ENCODE measurements at regions of chr6 and their contacts with region 1.

Region 1: DNA sequence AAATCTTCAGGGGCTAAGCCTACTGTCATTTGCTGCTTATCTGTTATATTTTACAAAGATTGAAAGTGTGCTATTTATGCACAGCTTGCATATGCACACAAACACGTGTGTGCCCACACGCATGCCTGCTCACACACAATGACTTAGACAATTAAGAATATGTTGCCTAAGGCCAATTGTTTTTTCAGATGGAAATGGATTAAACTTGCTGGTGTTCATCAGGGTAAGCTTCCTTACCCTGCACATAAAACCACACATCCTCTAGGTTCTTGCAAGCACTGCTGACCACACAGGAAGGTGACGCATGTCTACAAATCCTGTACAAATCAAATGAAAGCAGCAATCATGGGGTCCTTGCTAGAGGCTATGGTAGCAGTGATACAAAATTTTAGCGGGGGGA is 58.4 kb downstream of the GJA10 start:
- DNase-seq: peak; percentile 53
- H3K4me3 Mint-ChIP-seq: peak overlapping the region; percentile 49
- H3K27ac Mint-ChIP-seq: peak overlapping the region; percentile 76
- H3K4me1 Mint-ChIP-seq: peaks cover 67% of the 10 kb centered on the region
- H3K27me3 Mint-ChIP-seq: no peaks in the 10 kb centered on the region

Region 2: GRCh38 chr6:89797317-89797716 is 155.4 kb before region 1 on chr6:
- intact Hi-C with region 1: no loop called
- DNase-seq: no peak
- H3K4me3 Mint-ChIP-seq: no peak overlapping the region
- H3K27ac Mint-ChIP-seq: no peak overlapping the region
- H3K4me1 Mint-ChIP-seq: peaks cover 31% of the 10 kb centered on the region
- H3K27me3 Mint-ChIP-seq: no peaks in the 10 kb centered on the region

Region 3: GRCh38 chr6:89985751-89986493 is 33.2 kb after region 1 on chr6:
- intact Hi-C with region 1: loop called (anchors 2 kb)
- DNase-seq: no peak
- H3K4me3 Mint-ChIP-seq: no peak overlapping the region
- H3K27ac Mint-ChIP-seq: peak overlapping the region; percentile 53
- H3K4me1 Mint-ChIP-seq: peaks cover 64% of the 10 kb centered on the region
- H3K27me3 Mint-ChIP-seq: no peaks in the 10 kb centered on the region

Region 4: DNA sequence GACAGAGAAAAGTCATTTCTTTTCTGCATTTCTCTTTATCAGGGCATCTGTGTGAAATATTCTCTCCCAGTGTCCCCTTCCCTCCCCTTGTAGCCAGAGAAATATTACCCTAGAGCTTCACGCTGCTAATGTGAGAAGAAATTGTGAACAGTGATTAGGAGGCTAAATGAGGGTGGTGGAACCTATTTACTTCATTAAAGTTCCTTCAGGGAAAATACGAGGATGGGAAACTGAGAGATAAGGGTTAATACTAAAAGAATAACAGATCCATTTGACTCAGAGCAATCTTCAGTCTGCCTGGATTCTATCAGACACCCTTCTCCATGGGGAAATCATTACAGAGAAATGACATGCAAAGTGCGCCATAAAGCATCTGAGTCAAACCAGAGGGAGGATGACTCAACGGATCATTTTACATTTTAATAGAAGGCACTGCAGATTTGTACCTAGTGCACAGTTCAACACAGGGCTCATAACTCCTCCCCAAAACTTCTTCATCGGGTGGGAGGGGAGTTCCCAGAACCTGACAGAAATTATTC is 72.9 kb after region 1 on chr6:
- intact Hi-C with region 1: loop called (anchors 5 kb)
- DNase-seq: no peak
- H3K4me3 Mint-ChIP-seq: peak overlapping the region; percentile 72
- H3K27ac Mint-ChIP-seq: peak overlapping the region; percentile 92
- H3K4me1 Mint-ChIP-seq: peaks cover 71% of the 10 kb centered on the region
- H3K27me3 Mint-ChIP-seq: no peaks in the 10 kb centered on the region

Region 5: GRCh38 chr6:90110971-90111370 is 158.3 kb after region 1 on chr6:
- intact Hi-C with region 1: loop called (anchors 2 kb)
- DNase-seq: peak; percentile 76
- H3K4me3 Mint-ChIP-seq: peak overlapping the region; percentile 0
- H3K27ac Mint-ChIP-seq: peak overlapping the region; percentile 68
- H3K4me1 Mint-ChIP-seq: peaks cover 69% of the 10 kb centered on the region
- H3K27me3 Mint-ChIP-seq: no peaks in the 10 kb centered on the region

Region 6: GRCh38 chr6:90194371-90194841 is 241.7 kb after region 1 on chr6:
- intact Hi-C with region 1: loop called (anchors 5 kb)
- DNase-seq: no peak
- H3K4me3 Mint-ChIP-seq: no peak overlapping the region
- H3K27ac Mint-ChIP-seq: peak overlapping the region; percentile 43
- H3K4me1 Mint-ChIP-seq: peaks cover 63% of the 10 kb centered on the region
- H3K27me3 Mint-ChIP-seq: no peaks in the 10 kb centered on the region

Region 7: DNA sequence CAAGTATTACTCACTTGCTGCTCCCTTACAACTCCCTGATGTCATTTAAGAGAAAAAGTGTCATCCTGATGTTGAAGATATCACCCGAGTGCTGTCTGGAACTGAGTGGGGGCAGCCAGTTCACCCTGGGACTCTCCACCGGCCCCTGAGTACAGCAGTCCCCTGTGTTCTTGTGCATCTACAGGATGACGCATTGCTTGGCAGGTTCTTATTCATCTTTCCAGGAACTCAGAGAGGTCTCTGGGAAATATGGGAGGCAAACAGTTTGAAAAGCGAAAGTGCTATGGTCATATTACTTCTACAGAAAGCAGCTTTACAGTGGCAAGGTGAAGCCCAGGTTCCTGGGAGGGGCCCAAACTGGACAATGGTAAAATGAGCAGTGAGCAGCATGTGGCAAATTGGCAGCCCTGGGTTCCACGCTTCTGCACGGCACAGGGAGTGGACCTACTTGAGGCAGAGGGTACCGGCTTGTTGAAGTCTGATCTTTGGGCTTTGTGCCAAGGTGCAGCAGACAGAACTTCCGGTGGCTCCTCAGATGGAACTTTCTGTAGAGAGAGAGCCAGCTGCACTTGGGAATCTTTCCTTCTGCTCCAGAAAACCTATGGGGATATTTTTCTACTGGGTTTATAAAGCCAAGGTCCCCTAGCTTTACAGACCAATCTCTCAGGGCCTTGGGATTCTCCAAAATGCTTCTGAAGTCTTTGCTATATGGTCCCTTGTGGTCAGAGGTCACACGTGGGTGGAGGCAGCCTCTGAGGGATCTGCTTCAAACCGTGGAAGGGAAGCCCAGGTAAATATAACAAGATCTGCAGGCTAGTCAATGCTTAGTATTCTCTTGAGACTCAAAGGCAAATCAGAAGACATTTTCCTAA is 505.9 kb after region 1 on chr6:
- intact Hi-C with region 1: loop called (anchors 5 kb)
- DNase-seq: peak; percentile 68
- H3K4me3 Mint-ChIP-seq: peak overlapping the region; percentile 27
- H3K27ac Mint-ChIP-seq: peak overlapping the region; percentile 95
- H3K4me1 Mint-ChIP-seq: peaks cover 76% of the 10 kb centered on the region
- H3K27me3 Mint-ChIP-seq: no peaks in the 10 kb centered on the region

Region 8: DNA sequence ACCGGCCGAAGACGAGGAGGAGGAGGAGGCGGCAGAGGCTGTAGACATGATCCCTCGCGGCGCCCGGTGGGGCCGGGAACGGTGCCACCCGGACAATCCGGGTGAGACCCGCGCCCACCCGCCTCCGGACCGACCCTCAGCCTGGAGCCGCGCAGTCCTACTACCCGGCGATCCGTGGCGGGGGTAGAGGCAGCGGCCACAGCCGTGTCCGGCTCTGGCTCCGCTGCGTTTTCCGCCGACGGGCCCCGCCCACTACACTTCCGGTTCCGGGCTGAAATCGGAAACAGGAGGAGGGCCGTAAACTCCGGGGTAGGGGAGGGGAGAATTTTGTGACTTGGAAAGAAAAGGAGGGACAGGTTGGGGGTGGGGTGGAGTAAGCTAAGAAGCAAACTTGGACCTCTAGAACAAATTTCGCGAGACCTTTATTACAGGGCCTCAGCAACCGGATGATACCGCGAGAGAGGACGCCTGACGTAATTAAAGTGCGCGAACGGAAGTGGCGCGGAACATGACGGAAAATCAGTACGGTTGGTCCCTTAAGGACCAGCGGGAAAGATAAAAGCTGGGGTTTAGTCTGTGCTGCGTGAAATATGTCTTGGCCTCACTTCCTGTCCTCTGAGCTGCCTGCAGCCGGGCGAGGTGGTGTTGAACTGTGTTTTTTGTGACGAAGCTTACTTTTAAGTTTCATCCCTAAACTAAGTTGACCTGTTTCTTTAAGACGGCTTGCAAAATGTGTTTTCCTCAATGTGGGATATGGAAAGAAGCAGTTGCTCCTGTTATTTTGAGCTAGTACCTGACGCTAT is 634.4 kb after region 1 on chr6 and contains the start of gene MAP3K7:
- intact Hi-C with region 1: loop called (anchors 10 kb)
- DNase-seq: peak; percentile 93
- H3K4me3 Mint-ChIP-seq: peak within 1 kb of the TSS; percentile 94
- H3K27ac Mint-ChIP-seq: peak within 1 kb of the TSS; percentile 95
- H3K4me1 Mint-ChIP-seq: peaks cover 42% of the 10 kb centered on the region
- H3K27me3 Mint-ChIP-seq: peaks cover 20% of the 10 kb centered on the region
- total RNA-seq, gene MAP3K7: 30.5 and 32.1 TPM in 2 replicates